Dendritic cell treated with granulocyte-macrophage colony-stimulating factor and Interleukin-4, amounts not matched to agents 40 ng/mL and 50 ng/mL, for 4 days (primary cell): ENCODE measurements at regions of chr17 and their contacts with region 1.

Region 1: DNA sequence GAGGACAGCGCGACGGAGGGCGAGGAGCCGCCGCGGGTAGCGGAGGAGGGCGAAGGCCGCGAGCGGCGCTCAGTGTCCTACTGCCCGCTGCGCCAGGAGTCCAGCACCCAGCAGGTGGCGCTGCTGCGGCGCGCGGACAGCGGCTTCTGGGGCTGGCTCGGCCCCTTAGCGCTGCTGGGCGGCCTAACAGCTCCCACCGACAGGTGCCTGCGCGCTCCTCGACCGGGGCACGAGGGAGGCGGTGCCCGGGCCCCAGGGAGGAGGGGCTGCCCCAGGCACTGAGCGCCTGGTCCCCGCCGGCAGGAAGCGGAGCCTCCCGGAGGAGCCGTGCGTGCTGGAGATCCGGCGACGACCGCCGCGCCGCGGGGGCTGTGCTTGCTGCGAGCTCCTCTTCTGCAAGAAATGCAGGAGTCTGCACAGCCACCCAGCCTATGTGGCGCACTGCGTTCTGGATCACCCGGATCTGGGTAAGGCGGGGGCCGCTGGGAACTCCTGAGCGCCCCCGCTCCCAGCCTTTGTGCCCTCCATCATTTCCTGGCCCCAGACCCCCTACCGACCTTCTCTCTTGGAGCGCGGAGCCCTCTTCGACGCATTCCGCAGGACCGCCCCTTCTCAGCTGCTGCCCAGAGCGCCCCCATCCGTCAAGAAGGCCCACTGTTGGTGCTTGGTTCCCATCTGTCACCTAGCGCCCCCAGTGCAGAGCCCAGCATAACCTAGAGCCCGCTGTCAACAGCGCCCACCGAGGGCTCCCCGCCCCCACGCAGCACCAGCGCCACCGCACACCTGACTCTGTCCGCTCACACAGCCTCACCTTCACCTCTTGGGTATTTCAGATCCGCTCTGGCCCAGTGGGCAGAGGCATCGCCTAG is 3.7 kb downstream of the C17orf50 start:
- H3K4me3 Mint-ChIP-seq: peak overlapping the region; percentile 78
- H3K27ac Mint-ChIP-seq: peak overlapping the region; percentile 40
- H3K4me1 Mint-ChIP-seq: peaks cover 13% of the 10 kb centered on the region
- H3K27me3 Mint-ChIP-seq: peaks cover 47% of the 10 kb centered on the region

Region 2: DNA sequence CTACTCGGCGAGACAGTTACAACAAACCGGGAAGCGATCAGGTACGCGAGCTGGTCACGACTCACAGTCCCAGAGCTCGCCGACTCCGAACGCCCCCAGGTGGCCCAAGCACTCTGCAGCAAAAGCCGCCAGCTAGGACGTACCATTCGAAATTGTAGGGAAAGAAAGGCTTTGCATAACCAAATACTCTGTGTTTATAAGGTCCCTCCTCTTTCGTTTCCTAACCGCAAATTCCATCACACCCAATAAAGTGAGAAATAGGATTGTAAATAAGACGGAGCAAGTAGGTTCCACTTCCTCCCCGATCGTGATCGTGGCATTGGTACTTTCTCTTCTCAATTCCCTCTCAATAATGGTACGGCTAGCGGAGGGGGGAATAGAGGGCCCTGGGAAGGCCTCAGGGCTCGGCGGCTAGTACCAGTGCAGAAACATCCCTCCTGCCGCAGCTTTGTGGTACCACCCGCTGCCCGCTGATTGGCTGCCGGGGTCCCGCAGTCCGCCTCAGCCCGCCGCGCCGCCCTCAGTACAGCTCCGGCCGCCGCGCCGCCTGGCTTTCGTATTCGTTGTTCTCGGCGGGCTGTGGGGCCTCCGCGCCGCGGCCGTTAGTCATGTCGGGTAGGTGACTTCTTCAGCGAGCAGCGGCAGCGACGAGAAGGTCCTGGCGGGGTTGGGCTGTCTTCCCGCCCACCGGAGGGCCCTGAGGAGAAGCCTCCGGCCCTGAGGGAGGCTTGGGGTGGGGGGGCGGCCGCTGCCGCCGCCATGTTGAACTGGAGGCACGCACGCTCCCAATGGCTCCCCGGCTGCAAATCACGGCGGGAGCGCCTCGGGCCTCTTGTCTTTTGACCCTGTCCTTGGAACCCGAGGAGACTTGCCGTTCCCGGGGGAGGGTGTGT is 44.9 kb after region 1 on chr17 and contains the start of gene TAF15:
- intact Hi-C with region 1: loop called (anchors 1 kb)
- H3K4me3 Mint-ChIP-seq: peak within 1 kb of the TSS; percentile 94
- H3K27ac Mint-ChIP-seq: peak within 1 kb of the TSS; percentile 97
- H3K4me1 Mint-ChIP-seq: peaks cover 49% of the 10 kb centered on the region
- H3K27me3 Mint-ChIP-seq: peaks cover 14% of the 10 kb centered on the region